ENCODE measurements at regions of chr12 and their contacts with region 1.

Region 1: DNA sequence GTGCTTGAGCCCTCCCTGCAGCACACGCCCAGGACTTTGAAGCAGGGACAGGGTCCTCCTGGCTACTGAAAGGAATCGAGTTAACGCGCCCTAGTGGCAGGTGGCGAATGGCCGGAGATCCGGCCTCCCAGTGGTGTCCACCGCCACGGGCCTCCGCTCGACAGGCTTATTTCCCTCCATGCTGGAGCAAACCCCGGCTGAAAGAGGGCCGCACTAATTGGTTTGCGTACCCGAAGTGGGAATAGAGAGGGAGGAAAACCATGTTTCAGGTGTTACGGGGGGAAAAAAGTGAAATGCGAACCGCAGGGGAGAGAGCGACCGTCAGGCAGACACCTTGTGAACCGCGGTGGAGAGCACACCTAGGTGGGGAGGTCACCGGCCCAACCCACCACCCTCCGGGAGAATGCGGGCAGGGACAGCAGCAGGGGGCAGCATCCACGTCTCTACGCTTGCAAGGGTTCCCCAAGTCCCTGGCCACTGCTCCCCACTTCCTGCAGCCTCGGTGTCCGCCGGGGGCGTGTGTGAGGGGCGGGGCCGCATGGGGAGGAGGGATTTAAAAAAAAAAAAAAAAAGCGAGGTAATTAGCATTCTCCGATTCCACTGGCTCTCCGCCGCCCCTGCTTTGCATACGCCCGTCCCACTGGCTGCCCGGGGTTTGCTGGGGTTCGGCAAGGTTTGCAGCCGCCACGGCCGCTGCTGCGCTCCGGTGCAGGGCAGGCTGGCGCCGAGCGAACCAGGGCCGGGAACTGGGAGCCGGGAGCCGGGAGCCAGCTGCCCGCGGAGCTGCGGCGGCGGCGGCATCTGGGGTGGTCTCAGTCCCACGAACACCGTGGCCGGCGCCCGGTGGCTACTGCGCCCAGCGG is 224.6 kb upstream of the CRY1 start:
- DNase-seq: peak; percentile 94
- H3K4me3 ChIP-seq: peak overlapping the region; percentile 57 to 82 (median 76)
- H3K27ac ChIP-seq: peak overlapping the region; percentile 18
- H3K4me1 ChIP-seq: peaks cover 20% of the 10 kb centered on the region
- H3K27me3 ChIP-seq: peaks cover 2% of the 10 kb centered on the region
- CTCF ChIP-seq: peak; percentile 15 to 57

Region 2: GRCh38 chr12:106855221-106855758 is 462.7 kb before region 1 on chr12:
- CTCF ChIA-PET with region 1: no interaction called
- dilution Hi-C with region 1: no loop called
- in situ Hi-C with region 1: no loop called
- intact Hi-C with region 1: no loop called
- DNase-seq: no peak
- H3K4me3 ChIP-seq: no peak overlapping the region
- H3K27ac ChIP-seq: no peak overlapping the region
- H3K4me1 ChIP-seq: no peaks in the 10 kb centered on the region
- H3K27me3 ChIP-seq: no peaks in the 10 kb centered on the region
- CTCF ChIP-seq: no peak

Region 3: GRCh38 chr12:107126796-107127481 is 191.0 kb before region 1 on chr12:
- CTCF ChIA-PET with region 1: interaction called, 4 read pairs
- dilution Hi-C with region 1: no loop called
- in situ Hi-C with region 1: loop called in 1 of 2 experiments (anchors 5 kb)
- intact Hi-C with region 1: loop called (anchors 1 kb)
- DNase-seq: peak; percentile 7
- H3K4me3 ChIP-seq: no peak overlapping the region
- H3K27ac ChIP-seq: no peak overlapping the region
- H3K4me1 ChIP-seq: no peaks in the 10 kb centered on the region
- H3K27me3 ChIP-seq: no peaks in the 10 kb centered on the region
- CTCF ChIP-seq: peak; percentile 35 to 60

Region 4: GRCh38 chr12:107200394-107200793 is 117.6 kb before region 1 on chr12:
- CTCF ChIA-PET with region 1: no interaction called
- dilution Hi-C with region 1: no loop called
- in situ Hi-C with region 1: no loop called
- intact Hi-C with region 1: loop called (anchors 5 kb)
- DNase-seq: peak; percentile 85
- H3K4me3 ChIP-seq: no peak overlapping the region
- H3K27ac ChIP-seq: no peak overlapping the region
- H3K4me1 ChIP-seq: peaks cover 7% of the 10 kb centered on the region
- H3K27me3 ChIP-seq: no peaks in the 10 kb centered on the region
- CTCF ChIP-seq: no peak

Region 5: DNA sequence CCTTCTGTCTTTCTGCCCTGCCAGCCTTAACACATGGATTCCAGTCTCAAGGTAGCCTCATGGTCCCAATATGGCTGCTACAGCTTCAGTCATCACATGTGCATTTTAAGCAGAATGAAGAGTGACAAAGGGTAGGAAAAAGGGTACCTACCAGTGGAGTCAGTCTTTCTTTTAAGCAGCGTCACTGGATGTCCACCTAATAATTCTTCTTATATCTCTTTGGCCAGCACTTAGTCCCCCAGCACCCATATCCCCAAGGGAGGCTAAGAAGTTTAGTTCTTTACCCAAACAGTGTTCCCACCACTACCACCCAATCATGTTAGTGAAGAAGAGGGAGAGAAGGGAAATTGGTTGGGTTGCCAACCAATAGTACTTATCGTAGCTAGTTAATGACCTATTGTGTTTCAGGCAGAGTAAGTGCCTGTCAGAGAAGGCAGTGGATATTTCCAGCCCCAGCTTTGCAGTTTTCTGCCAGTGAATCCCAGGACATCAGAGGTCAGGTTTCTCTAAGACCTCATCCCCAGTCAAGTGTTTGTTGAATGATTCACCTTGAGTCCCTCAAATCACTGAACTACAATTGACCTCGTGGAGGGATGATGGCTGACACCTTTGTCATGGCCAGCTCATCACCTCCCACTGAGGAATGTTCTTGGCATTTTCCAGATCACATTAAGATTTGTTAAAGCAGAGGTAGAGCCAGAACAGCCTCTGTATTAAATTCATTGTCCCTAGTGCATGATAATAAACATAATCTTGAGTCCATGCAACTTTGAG is 26.2 kb after region 1 on chr12:
- CTCF ChIA-PET with region 1: interaction called, 3 read pairs
- dilution Hi-C with region 1: no loop called
- in situ Hi-C with region 1: no loop called
- intact Hi-C with region 1: loop called (anchors 2 kb)
- DNase-seq: peak; percentile 91
- H3K4me3 ChIP-seq: no peak overlapping the region
- H3K27ac ChIP-seq: peak overlapping the region; percentile 54
- H3K4me1 ChIP-seq: peaks cover 32% of the 10 kb centered on the region
- H3K27me3 ChIP-seq: no peaks in the 10 kb centered on the region
- CTCF ChIP-seq: no peak

Region 6: DNA sequence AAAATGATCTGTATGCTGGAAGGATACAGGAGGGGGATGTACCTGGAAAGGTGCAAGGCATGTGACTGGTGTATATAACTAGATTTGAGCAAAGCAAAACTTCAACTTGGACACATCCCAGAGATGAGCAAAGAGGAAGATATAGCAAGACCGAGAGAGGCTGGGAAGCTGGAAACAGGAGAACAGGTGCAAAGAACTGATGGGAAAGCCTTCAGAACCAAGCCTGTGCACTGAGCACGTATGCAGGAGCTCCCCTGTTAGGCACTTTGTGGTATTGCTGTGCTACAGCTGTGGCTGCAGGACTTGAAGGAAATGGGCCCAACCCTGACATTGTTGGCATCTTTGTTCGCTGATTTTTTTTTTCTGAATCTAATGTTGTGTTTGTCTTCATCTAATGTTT is 247.0 kb after region 1 on chr12:
- CTCF ChIA-PET with region 1: no interaction called
- dilution Hi-C with region 1: no loop called
- in situ Hi-C with region 1: no loop called
- intact Hi-C with region 1: loop called (anchors 1 kb)
- DNase-seq: peak; percentile 23
- H3K4me3 ChIP-seq: no peak overlapping the region
- H3K27ac ChIP-seq: no peak overlapping the region
- H3K4me1 ChIP-seq: peaks cover 20% of the 10 kb centered on the region
- H3K27me3 ChIP-seq: no peaks in the 10 kb centered on the region
- CTCF ChIP-seq: peak; percentile 71 to 87

Region 7: GRCh38 chr12:107938446-107938845 is 620.5 kb after region 1 on chr12:
- CTCF ChIA-PET with region 1: no interaction called
- dilution Hi-C with region 1: no loop called
- in situ Hi-C with region 1: no loop called
- intact Hi-C with region 1: no loop called
- DNase-seq: no peak
- H3K4me3 ChIP-seq: no peak overlapping the region
- H3K27ac ChIP-seq: no peak overlapping the region
- H3K4me1 ChIP-seq: no peaks in the 10 kb centered on the region
- H3K27me3 ChIP-seq: peaks cover 3% of the 10 kb centered on the region
- CTCF ChIP-seq: no peak